ENCODE measurements at regions of chr6 and their contacts with region 1.

Region 1: GRCh38 chr6:13526727-13527670 is 39.6 kb upstream of the GFOD1 start:
- DNase-seq: peak; percentile 94
- H3K4me3 ChIP-seq: no peak overlapping the region
- H3K27ac ChIP-seq: peak overlapping the region; percentile 65
- H3K4me1 ChIP-seq: peaks cover 37% of the 10 kb centered on the region
- H3K27me3 ChIP-seq: no peaks in the 10 kb centered on the region
- CTCF ChIP-seq: no peak
- POLR2A ChIP-seq: peak; percentile 63

Region 2: DNA sequence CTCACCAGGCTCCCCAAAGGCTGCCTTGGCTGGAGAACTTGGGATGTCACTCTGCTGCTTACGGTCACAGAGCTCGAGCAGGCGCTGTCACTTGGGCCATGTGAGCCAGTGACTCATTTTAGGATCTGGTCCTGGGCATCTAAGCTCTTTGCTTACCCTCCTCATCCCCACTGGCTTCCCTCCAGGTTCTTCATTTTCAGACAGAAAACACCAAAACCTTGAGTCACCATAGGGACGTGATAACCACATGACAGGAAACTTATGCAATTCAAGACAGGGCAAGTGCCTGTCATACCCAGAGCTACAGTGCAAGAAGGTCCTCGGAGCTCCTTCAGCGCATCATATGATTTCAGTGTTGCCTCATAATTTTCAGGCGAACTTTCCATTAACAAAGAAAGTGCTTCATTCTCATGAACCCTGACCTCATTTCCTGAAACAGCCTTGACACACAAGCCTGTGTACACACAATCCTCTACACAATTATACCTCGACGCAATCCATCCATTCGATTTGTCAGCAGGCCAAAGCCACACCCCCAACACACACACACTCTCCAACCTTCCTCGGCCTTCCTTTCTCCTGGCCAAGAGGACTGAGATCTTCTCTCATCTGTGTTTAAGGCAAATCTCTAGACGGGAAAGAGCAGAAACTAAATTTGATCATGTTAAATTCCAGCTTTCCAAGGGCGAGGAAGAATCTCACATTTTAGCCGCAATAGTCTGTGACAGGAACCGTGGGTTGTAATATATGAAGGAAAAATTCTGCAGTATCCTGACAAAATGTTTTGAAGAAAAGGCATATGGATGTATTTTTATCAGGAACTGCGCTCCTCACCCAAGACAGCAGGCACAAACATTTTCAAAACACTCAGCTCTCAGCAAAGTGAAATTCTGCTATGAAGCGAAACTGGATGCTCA is 224.0 kb before region 1 on chr6:
- CTCF ChIA-PET with region 1: no interaction called
- POLR2A ChIA-PET with region 1: no interaction called
- dilution Hi-C with region 1: no loop called
- intact Hi-C with region 1: loop called (anchors 1 kb)
- DNase-seq: peak; percentile 93
- H3K4me3 ChIP-seq: peak overlapping the region in 1 of 3 experiments; percentile 15
- H3K27ac ChIP-seq: peak overlapping the region; percentile 86
- H3K4me1 ChIP-seq: peaks cover 36% of the 10 kb centered on the region
- H3K27me3 ChIP-seq: no peaks in the 10 kb centered on the region
- CTCF ChIP-seq: no peak
- POLR2A ChIP-seq: no peak

Measured in endothelial cell of umbilical vein (primary cell).